ENCODE measurements at regions of chr7 and their contacts with region 1.

Region 1: DNA sequence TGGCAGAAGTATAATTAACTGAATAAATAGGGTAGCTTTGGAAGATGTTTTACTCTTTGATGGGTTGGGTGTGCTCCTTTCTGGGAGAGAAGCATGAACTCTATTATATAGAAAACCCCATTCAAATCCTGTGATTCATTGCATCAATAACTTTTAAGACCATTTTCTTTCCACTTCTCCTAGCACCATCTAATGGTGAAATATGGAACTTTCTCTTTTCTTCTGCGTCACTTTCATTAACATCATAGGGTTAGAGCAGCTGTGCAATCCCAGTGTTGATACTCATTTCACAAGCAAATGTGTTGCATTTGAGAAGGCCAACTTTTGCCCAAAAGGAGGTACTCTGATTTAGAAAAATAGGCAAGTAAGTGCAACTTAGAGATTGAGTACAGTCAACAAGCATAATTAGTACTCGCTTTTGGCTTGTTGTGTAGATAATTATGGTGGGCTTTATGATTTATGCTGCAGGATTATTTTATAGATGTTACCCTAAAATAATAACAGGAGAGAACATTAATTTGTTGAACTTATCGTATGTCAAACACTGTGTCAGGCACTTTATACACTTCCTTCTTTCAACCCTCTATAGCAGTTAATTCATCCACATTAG is 92.9 kb downstream of the CPED1 start:
- DNase-seq: peak; percentile 32

Region 2: GRCh38 chr7:120987683-120988590 is 93.5 kb before region 1 on chr7:
- CTCF ChIA-PET with region 1: interaction called, 13 read pairs
- POLR2A ChIA-PET with region 1: no interaction called
- DNase-seq: peak; percentile 79